Cardiac septum (tissue), 1 donor: ENCODE measurements at regions of chr6 and their contacts with region 1.

Region 1: GRCh38 chr6:134720353-134721059 is 229.4 kb downstream of the ALDH8A1 start:
- DNase-seq: no peak

Region 2: GRCh38 chr6:134539865-134540323 is 180.6 kb before region 1 on chr6:
- intact Hi-C with region 1: loop called (anchors 5 kb)
- DNase-seq: peak; percentile 76

Region 3: GRCh38 chr6:134787261-134787877 is 66.9 kb after region 1 on chr6:
- intact Hi-C with region 1: no loop called
- DNase-seq: no peak

Region 4: DNA sequence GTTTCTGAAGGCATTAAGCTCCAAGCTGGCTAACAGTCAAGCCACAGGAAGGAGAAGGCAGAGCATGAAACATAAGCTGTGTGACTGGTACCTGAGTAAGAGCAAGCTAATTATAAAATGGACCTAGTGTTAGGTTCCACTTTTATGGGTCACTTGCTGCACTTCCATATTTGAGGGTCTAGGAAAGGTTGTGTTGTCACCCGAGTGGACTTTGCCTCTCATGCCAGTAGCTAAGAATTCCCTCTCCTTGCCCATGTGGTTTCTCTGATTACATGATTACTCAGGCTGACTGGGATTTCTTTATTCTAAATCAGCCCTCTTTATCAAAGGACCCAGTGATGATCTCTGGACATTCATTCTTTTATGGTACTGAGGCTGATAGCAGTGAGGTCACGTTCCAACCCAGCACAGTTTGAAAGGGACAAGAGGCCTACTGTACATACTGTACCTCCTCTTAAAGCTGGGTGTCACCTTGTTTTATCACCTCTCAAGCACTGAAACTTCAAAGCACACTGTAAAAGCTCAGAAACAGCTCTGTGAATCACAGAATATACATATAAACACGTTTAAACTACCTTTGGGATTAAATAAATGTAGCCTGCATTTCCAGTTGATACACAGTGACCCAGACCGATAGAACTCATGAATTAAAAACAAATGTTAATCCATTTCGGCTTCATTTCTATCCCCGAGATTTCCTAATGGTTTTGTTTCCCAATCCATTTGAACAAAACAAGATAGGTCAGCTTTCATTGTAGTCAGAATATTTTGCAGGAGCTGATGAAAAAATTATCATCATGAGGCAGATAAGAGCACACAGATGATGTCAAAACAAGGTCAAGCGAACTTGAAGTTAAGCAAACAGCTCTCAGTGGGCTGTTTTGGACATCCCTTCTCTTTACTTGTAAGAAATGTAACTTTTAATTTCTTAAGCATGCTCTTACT is 132.9 kb after region 1 on chr6:
- intact Hi-C with region 1: no loop called
- DNase-seq: no peak